Right ventricle myocardium inferior (tissue), 1 donor: ENCODE measurements at regions of chr6 and their contacts with region 1.

Region 1: DNA sequence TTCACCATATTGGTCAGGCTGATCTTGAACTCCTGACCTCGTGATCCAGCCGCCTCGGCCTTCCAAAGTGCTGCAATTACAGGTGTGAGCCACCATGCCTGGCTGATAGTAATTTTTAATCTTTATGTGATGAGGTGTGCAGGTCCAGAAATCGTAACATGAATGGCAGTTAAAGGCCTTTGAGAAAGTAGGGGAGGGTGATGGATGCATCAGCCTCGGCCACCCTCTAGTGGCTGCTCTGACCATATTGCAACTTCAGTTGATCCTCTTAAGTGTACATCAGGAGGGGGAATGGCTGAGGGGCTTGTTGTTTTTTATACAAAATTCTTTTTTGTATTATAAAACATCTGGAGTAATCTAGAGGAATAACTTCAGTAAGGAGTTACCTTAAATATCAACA is 193.0 kb downstream of the ZFAND3 start:
- DNase-seq: no peak
- ATAC-seq: peak; percentile 56

Region 2: GRCh38 chr6:37705239-37706051 is 307.1 kb before region 1 on chr6:
- intact Hi-C with region 1: loop called (anchors 10 kb)
- DNase-seq: peak; percentile 91
- ATAC-seq: peak; percentile 92

Region 3: GRCh38 chr6:37731371-37731770 is 281.2 kb before region 1 on chr6:
- intact Hi-C with region 1: no loop called
- DNase-seq: no peak
- ATAC-seq: no peak

Region 4: GRCh38 chr6:37741757-37742400 is 270.7 kb before region 1 on chr6:
- intact Hi-C with region 1: loop called (anchors 2 kb)
- DNase-seq: no peak
- ATAC-seq: peak; percentile 52